Calu3 (cell line): ENCODE measurements at regions of chr3 and their contacts with region 1.

Region 1: DNA sequence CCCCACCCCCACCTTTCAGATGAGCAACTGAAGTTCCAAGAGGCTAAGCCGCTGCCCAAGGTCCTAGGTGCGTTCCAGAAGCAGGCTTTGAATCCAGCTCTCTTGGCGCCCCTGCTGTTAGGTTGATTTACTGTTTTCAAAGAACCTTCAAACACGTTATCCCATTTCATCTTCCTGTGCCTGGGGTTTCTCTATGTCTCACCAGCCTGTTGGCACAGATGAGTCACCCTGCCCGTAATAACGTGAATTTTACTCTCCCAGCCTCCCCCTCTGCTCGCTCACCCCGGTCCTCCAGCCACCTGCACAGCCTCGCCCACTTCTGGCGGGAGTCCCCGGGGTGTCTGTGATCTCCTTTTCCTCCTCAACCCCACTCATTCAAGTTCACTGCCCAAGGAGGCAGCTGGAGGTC is 13.0 kb upstream of the TSEN2 start:
- DNase-seq: peak; percentile 75
- H3K4me3 Mint-ChIP-seq: peak overlapping the region; percentile 39
- H3K27ac Mint-ChIP-seq: peak overlapping the region; percentile 83
- H3K4me1 Mint-ChIP-seq: peaks cover 38% of the 10 kb centered on the region
- H3K27me3 Mint-ChIP-seq: no peaks in the 10 kb centered on the region
- CTCF ChIP-seq: no peak

Region 2: DNA sequence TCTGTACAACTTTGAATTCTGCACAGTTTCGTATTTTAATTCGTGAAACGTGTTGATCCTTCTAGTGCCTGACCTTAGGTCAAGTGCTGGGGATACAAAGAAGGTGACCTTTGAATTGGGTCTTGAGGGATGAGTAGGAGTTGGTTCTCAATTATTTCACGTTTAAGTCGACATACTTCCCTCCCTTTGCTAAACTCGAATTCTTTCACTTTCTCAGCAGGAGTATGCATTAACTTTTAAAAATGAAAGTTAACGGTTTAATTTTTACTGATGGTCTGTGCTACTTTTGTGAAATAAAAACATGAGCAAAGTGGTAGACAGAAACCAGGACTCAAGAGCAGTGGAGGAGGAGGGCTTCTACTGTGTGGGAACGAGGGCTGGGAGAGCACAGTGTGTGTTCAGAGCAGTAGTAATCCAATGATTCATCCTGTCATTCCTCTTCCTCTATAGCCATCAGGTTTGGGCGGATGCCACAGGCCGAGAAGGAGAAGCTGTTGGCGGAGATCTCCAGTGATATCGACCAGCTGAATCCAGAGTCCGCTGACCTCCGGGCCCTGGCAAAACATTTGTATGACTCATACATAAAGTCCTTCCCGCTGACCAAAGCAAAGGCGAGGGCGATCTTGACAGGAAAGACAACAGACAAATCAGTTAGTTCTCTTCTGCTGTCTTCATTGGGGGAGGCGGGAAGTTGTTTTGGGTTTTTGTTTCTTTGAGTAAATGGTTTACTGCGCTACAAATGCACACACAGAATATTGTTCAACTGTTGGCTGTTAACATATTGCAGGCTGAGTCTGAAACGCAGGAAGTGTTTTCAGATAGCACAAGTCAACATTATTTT is 65.6 kb before region 1 on chr3:
- CTCF ChIA-PET with region 1: no interaction called
- intact Hi-C with region 1: loop called (anchors 5 kb)
- DNase-seq: peak; percentile 85
- H3K4me3 Mint-ChIP-seq: peak overlapping the region; percentile 55
- H3K27ac Mint-ChIP-seq: peak overlapping the region; percentile 85
- H3K4me1 Mint-ChIP-seq: peaks cover 46% of the 10 kb centered on the region
- H3K27me3 Mint-ChIP-seq: no peaks in the 10 kb centered on the region
- CTCF ChIP-seq: no peak

Region 3: GRCh38 chr3:12444582-12445468 is 26.4 kb before region 1 on chr3:
- CTCF ChIA-PET with region 1: interaction called, 3 read pairs
- intact Hi-C with region 1: loop called (anchors 2 kb)
- DNase-seq: peak; percentile 90
- H3K4me3 Mint-ChIP-seq: peak overlapping the region; percentile 51
- H3K27ac Mint-ChIP-seq: peak overlapping the region; percentile 94
- H3K4me1 Mint-ChIP-seq: peaks cover 56% of the 10 kb centered on the region
- H3K27me3 Mint-ChIP-seq: no peaks in the 10 kb centered on the region
- CTCF ChIP-seq: no peak

Region 4: DNA sequence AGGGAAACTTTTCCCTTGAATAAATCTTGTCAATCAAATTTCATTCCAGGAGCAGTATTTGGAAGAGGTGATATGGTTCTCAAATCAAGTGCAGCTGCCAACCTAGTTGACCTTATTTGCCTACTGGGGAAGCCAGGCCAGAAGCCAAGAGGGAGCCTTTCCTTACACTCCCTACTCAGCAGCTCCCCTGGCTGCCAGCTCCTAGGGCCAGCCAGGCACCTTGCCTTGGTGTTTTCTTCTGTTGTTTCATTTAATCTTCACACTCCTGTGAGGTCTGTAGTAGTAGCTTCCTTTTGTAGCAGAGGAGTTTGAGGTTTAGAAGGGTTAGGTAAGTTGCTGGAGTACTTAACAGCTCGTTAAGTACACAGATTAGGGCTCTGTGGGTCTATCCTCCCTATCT is 51.5 kb after region 1 on chr3:
- CTCF ChIA-PET with region 1: no interaction called
- intact Hi-C with region 1: no loop called
- DNase-seq: no peak
- H3K4me3 Mint-ChIP-seq: no peak overlapping the region
- H3K27ac Mint-ChIP-seq: no peak overlapping the region
- H3K4me1 Mint-ChIP-seq: no peaks in the 10 kb centered on the region
- H3K27me3 Mint-ChIP-seq: no peaks in the 10 kb centered on the region
- CTCF ChIP-seq: no peak